ENCODE measurements at regions of chr6 and their contacts with region 1.

Region 1: GRCh38 chr6:71288228-71289001 is at the start of gene OGFRL1:
- H3K4me3 Mint-ChIP-seq: peak within 1 kb of the TSS; percentile 81
- H3K27ac Mint-ChIP-seq: peak within 1 kb of the TSS; percentile 93
- H3K4me1 Mint-ChIP-seq: peaks cover 51% of the 10 kb centered on the region
- H3K27me3 Mint-ChIP-seq: no peaks in the 10 kb centered on the region

Region 2: DNA sequence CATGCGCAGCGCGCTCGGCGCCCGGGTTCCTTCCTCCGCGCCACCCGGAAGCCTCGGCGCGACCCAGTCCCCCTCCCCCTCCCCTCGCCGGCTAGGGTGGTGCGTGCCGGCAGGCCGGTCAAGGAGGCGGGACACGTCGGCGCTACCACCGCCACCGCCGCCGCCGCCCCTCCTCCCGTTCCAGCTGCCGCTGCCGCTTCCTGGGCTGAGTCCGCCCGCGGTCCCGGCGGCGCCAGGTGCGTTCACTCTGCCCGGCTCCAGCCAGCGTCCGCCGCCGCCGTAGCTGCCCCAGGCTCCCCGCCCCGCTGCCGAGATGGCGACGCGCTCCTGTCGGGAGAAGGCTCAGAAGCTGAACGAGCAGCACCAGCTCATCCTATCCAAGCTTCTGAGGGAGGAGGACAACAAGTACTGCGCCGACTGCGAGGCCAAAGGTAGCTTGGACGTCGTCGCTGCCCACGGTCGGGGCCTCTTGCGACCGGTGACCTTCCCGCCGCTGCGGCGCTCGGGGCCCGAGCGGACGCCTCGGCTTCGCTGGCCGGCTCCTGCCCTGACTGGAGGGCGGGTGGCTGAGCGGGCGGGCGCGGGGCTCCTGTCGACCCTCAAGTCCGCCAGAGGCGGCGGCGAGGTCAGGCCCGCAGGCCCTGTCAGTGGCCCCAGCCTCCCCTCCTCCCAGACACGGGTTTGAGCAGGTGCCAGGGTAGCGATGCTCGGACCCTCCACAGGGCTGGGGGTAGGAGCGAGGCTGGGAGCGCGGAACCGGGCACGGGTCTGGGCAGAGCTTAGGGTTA is 620.5 kb before region 1 on chr6 and contains the start of gene SMAP1:
- intact Hi-C with region 1: loop called (anchors 5 kb)
- H3K4me3 Mint-ChIP-seq: peak within 1 kb of the TSS; percentile 87
- H3K27ac Mint-ChIP-seq: peak within 1 kb of the TSS; percentile 93
- H3K4me1 Mint-ChIP-seq: peaks cover 56% of the 10 kb centered on the region
- H3K27me3 Mint-ChIP-seq: no peaks in the 10 kb centered on the region

Region 3: DNA sequence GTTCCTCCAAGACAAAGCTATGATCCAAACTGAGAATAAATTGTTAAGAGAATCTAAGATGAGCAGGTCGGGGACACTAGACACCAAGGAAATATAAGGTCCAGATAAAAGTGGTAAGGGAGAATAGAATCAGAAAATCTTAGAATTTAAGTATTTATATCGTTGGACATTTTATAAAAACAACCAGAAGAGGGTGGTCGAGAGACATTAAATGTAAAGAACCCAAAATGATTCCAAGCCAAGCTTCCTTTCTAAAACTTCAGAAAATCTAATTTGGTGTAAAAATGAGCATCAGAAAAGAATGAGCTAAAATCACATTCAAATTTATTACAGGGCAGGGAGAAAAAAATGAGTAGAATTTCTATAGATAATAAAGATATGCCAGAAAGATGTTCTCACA is 97.6 kb before region 1 on chr6:
- intact Hi-C with region 1: loop called (anchors 2 kb)
- H3K4me3 Mint-ChIP-seq: peak overlapping the region; percentile 14
- H3K27ac Mint-ChIP-seq: peak overlapping the region; percentile 80
- H3K4me1 Mint-ChIP-seq: peaks cover 26% of the 10 kb centered on the region
- H3K27me3 Mint-ChIP-seq: no peaks in the 10 kb centered on the region

Region 4: GRCh38 chr6:71248306-71248765 is 40.1 kb before region 1 on chr6:
- intact Hi-C with region 1: loop called (anchors 1 kb)
- H3K4me3 Mint-ChIP-seq: no peak overlapping the region
- H3K27ac Mint-ChIP-seq: peak overlapping the region; percentile 75
- H3K4me1 Mint-ChIP-seq: peaks cover 54% of the 10 kb centered on the region
- H3K27me3 Mint-ChIP-seq: no peaks in the 10 kb centered on the region

Region 5: GRCh38 chr6:71349395-71349794 is 61.0 kb after region 1 on chr6:
- intact Hi-C with region 1: loop called (anchors 5 kb)
- H3K4me3 Mint-ChIP-seq: no peak overlapping the region
- H3K27ac Mint-ChIP-seq: no peak overlapping the region
- H3K4me1 Mint-ChIP-seq: peaks cover 27% of the 10 kb centered on the region
- H3K27me3 Mint-ChIP-seq: peaks cover 2% of the 10 kb centered on the region

Region 6: DNA sequence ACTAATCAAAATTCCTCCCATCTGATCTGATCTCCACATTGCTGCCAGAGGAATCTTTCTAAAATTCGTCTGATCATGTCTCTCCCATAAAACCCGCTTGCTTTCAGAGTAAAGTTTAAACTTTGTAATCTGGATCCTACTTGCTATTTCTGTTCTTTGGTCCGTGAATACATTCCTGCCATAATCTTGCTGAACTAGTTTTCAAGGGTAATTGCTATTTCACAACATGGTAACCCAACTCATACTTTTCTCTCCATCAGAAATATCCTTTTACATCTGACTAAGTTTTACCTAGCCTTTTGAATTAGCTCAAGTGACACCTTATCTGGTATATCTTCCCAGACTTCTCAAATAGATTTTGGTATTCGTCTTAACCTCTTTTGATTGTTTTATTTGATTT is 608.9 kb after region 1 on chr6:
- intact Hi-C with region 1: no loop called
- H3K4me3 Mint-ChIP-seq: no peak overlapping the region
- H3K27ac Mint-ChIP-seq: no peak overlapping the region
- H3K4me1 Mint-ChIP-seq: no peaks in the 10 kb centered on the region
- H3K27me3 Mint-ChIP-seq: no peaks in the 10 kb centered on the region

Measured in dendritic cell treated with granulocyte-macrophage colony-stimulating factor and Interleukin-4, amounts not matched to agents 40 ng/mL and 50 ng/mL, for 4 days (primary cell).